Calu3 (cell line): ENCODE measurements at regions of chr7 and their contacts with region 1.

Region 1: GRCh38 chr7:831596-832166 is 595 bp upstream of the SUN1 start:
- DNase-seq: peak; percentile 58
- H3K4me3 Mint-ChIP-seq: peak overlapping the region; percentile 58
- H3K27ac Mint-ChIP-seq: peak overlapping the region; percentile 91
- H3K4me1 Mint-ChIP-seq: peaks cover 56% of the 10 kb centered on the region
- H3K27me3 Mint-ChIP-seq: no peaks in the 10 kb centered on the region
- CTCF ChIP-seq: no peak

Region 2: DNA sequence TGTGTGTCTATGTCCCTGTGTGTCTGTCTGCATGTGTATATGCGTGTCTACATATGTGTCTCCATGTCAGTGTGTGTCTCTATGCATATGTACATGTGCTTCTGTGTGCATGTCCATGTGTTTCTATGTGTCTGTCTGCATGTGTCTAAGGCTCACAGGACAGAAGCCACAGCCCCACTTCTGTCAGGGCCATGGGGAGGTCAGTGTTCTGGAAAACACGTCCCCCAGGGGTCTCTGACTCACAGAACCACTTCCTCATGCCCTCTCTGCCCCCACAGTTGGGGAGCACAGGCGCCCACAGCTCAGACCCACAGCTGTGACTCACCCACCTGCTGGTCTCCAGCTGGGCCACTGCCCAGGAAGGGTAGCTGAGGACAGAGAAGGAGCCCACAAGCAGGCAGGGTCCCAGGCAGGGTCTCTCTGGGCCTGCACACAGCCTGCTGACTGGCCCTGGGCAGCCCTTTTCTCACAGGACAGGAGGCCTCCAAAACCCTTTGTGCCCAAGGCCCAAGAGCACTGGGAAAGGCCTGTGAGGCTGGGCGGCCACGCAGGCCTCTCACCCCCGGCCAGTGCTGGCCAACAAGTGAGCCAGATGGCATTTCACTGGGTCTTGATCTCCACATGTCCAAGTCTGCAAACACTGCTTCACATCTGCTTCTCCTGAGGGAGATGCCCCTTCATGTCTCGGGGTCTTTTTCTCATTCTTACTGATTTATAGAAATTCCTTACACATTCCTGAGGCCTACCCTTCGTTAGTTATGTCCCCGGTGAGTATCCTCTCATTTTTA is 742.3 kb before region 1 on chr7:
- CTCF ChIA-PET with region 1: no interaction called
- intact Hi-C with region 1: no loop called
- DNase-seq: peak; percentile 84
- H3K4me3 Mint-ChIP-seq: peak overlapping the region; percentile 32
- H3K27ac Mint-ChIP-seq: peak overlapping the region; percentile 36
- H3K4me1 Mint-ChIP-seq: peaks cover 81% of the 10 kb centered on the region
- H3K27me3 Mint-ChIP-seq: no peaks in the 10 kb centered on the region
- CTCF ChIP-seq: no peak

Region 3: DNA sequence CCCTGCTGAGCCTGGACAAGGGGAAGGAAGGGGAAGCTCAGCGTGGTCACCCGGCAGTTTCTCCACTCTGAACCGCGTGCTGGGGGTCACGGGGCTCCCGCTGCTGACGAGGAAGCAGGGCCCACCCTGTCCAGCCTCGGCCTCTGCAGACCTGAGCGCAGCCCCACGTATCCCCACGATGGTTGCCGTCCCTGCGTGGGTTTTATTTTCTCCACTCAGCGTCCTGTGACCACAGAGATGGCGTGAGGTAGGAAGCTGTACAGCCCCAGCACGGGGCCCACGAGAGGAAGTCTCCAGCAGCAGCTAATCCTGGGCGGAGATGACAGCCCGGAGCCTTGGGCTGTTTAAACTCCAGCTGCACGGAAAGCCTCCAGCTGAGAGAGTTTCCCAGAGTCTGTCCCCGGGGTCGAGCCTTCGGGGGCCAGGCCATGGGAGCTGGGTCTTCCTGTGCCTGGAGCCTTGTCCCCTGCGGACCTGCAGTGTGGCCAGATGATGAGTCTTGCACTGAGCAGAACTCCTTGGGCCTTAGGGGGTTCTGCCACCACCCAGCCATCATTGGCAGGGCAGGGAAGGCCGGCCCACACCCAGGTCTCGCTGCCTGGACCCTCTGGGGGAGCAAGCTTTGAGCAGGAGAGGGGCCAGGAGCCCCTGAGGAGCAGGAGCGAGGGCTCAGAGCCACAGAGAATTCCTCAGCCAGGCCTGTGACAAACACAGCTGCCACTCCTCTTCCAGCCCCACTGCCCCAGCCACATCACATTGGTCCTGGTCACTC is 712.1 kb before region 1 on chr7:
- CTCF ChIA-PET with region 1: no interaction called
- intact Hi-C with region 1: no loop called
- DNase-seq: no peak
- H3K4me3 Mint-ChIP-seq: no peak overlapping the region
- H3K27ac Mint-ChIP-seq: no peak overlapping the region
- H3K4me1 Mint-ChIP-seq: no peaks in the 10 kb centered on the region
- H3K27me3 Mint-ChIP-seq: peaks cover 84% of the 10 kb centered on the region
- CTCF ChIP-seq: no peak

Region 4: DNA sequence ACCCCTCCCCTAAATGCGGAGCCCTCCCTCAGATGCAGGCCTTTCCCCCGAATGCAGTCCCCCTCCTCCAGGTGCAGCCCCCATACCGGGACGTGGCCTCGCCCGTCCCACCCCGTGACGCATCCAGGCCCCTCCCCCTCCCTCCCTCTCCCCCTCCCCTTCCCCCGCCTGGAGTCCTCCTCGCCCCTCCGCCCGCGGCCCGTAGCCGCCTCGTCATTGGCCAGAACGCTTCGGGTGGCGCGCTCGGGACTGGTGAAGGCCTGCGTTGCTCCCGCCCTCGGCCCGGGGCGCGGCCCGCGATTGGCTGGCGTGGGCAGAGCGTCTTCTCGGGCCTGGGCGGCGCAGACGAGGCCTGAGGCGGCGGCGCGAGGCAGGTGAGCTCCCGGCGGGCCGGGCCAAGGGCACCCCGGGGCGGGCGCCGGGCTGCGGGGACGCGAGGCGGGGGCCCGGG is 15.4 kb before region 1 on chr7:
- CTCF ChIA-PET with region 1: interaction called, 18 read pairs
- intact Hi-C with region 1: loop called (anchors 2 kb)
- DNase-seq: peak; percentile 100
- H3K4me3 Mint-ChIP-seq: peak overlapping the region; percentile 93
- H3K27ac Mint-ChIP-seq: peak overlapping the region; percentile 52
- H3K4me1 Mint-ChIP-seq: peaks cover 60% of the 10 kb centered on the region
- H3K27me3 Mint-ChIP-seq: no peaks in the 10 kb centered on the region
- CTCF ChIP-seq: no peak

Region 5: GRCh38 chr7:1709900-1710299 is 878.2 kb after region 1 on chr7:
- CTCF ChIA-PET with region 1: no interaction called
- intact Hi-C with region 1: no loop called
- DNase-seq: no peak
- H3K4me3 Mint-ChIP-seq: no peak overlapping the region
- H3K27ac Mint-ChIP-seq: no peak overlapping the region
- H3K4me1 Mint-ChIP-seq: no peaks in the 10 kb centered on the region
- H3K27me3 Mint-ChIP-seq: peaks cover 96% of the 10 kb centered on the region
- CTCF ChIP-seq: peak; percentile 71